Activated naive CD4-positive, alpha-beta T cell treated with anti-CD3 and anti-CD28 coated beads, Interleukin-2, amount 10 ng/mL, durations not matched to agents 7 days and 5 days (primary cell): ENCODE measurements at regions of chr21 and their contacts with region 1.

Region 1: DNA sequence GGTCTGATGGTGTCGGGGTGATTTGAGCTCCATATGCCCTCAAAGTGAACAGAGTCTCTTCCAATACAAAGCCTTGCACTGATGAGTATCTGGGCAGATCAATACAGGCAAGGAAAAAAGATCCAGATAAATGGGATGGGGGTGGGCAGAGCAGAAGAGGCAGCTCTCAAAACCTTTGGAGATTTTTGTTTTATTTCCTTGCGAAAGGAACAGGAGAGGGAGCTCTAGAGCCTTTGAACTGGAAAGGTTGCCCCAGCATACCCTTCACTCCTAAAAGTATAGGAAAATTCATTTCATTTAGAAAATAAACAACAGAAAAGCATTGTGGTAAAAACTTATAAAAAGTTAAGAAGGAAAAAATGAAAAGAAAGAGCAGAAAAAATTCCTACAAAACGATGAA is 31.4 kb upstream of the OLIG2 start:
- DNase-seq: no peak
- H3K4me3 Mint-ChIP-seq: no peak overlapping the region
- H3K27ac Mint-ChIP-seq: no peak overlapping the region
- H3K4me1 Mint-ChIP-seq: no peaks in the 10 kb centered on the region
- H3K27me3 Mint-ChIP-seq: peaks cover 24% of the 10 kb centered on the region

Region 2: DNA sequence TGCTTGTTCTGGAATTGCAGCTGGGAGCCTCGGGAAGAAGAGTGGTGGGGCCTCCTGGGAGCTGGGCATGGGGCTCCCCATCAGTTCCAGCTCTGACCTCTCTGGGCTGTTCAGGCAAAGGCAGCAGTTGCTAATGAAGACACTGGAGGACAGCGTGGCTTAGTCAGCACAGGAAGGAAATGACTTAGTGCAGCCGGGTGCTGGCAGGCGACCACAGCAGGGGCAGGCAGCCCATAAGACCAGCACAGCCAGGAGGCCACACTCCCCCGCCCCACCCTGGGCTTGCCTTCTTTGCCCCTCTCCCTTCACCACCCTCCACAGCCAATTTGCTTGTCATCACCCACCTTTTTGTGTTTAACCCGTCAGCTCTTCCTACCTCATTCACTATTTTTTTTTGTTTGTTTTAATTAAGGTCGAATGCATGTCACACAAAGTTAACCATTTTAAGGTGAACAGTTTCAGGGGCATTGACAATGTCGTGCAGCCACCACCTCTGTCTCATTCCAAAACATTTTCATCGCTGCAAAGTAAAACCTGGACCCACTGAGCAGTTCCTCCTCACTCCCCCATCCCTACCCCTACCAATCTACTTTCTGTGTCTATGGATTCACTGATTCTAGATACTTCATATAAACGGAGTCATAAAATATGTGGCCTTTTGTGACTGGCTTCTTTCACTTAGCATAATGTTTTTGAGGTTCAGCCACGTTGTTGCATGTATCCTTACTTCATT is 42.3 kb after region 1 on chr21:
- CTCF ChIA-PET with region 1: no interaction called
- DNase-seq: peak; percentile 37
- H3K4me3 Mint-ChIP-seq: no peak overlapping the region
- H3K27ac Mint-ChIP-seq: no peak overlapping the region
- H3K4me1 Mint-ChIP-seq: peaks cover 11% of the 10 kb centered on the region
- H3K27me3 Mint-ChIP-seq: peaks cover 41% of the 10 kb centered on the region

Region 3: DNA sequence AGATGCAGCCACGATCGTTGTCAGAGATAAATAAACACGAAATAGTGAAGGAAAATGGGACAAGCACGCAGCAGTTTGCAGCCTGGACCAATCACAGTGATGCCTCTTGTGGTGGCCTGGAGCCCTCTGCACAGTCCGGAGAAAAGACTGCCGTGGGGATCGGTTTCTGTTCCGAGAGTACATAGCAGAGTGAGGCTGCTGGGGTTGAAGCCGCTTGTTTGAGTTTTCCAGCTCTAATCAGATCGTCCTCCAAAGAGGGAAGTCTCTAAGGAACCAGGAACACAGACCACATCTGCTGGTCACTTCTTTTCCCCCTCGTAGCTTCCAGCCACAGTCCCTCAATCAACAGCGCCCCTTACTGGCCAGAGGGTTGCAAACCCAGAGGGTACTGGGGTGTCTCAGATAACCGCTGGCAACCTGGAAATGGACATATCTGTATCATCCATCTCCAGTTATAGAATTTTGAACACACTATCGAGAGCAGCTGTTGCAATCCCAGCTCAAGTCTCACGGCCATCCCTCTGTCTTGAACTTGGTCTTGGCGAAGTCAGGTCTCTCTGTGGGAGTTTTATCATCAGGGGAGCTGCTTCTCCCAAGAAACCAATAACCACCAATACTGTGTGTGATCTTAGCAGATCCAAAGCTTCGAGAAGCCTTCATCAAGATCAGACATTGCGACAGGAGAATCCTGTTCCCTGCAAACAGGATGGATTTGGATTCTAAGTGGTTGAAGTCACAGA is 133.0 kb after region 1 on chr21:
- CTCF ChIA-PET with region 1: interaction called, 20 read pairs
- DNase-seq: peak; percentile 76
- H3K4me3 Mint-ChIP-seq: peak overlapping the region; percentile 42
- H3K27ac Mint-ChIP-seq: no peak overlapping the region
- H3K4me1 Mint-ChIP-seq: peaks cover 5% of the 10 kb centered on the region
- H3K27me3 Mint-ChIP-seq: peaks cover 30% of the 10 kb centered on the region